HAP-1 (cell line): ENCODE measurements at regions of chr13 and their contacts with region 1.

Region 1: DNA sequence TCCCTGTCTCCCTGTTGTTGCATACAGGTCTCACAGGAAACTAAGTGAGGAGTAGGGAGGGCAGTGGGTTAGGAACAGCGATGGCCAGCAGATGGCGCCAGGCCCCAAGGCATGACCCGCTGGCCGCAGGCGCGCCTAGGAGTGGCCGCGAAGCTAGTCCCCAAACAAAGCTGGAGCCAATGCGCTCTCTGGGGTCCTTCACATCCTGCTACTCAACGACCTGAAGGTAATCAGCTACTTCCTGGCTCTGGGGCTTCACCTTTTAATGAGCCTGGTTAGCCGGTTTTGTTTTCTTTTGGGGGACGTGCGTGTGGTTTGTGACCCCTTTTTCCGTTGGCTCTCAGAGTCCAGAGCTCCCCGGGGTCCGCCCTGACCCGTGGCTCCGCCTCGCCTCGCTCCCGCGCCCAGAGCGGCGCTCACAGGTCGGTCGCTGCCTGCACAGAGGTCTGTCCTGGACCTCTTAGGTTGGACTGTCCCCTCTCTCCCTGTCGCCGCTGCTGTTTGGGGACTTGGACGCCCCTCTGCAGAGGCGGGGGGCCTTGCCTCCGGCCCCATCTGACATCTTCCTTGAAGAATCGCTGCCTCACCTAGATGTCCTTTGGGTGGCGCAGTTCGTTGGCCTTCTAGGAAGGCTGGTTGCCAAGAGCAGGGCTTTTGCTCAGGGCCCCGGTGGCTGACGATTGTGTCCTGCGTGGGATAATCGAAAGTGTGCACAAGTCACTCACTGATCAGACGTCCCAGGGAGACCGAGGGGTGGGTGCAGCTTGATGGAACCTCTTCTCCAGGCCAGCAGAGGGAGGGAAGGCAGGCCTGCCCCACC is 62.1 kb upstream of the GTF3A start:
- DNase-seq: peak; percentile 77 to 92
- H3K4me3 ChIP-seq: peak overlapping the region; percentile 24
- H3K4me1 ChIP-seq: peaks cover 4% of the 10 kb centered on the region
- H3K27me3 ChIP-seq: no peaks in the 10 kb centered on the region

Region 2: GRCh38 chr13:27043013-27043412 is 319.3 kb before region 1 on chr13:
- in situ Hi-C with region 1: no loop called
- DNase-seq: peak; percentile 9 to 50
- H3K4me3 ChIP-seq: no peak overlapping the region
- H3K4me1 ChIP-seq: no peaks in the 10 kb centered on the region
- H3K27me3 ChIP-seq: no peaks in the 10 kb centered on the region

Region 3: GRCh38 chr13:27251166-27252091 is 110.8 kb before region 1 on chr13 and contains the start of gene RPL21:
- in situ Hi-C with region 1: no loop called
- DNase-seq: peak; percentile 84 to 92
- H3K4me3 ChIP-seq: peak within 1 kb of the TSS; percentile 97
- H3K4me1 ChIP-seq: peaks cover 5% of the 10 kb centered on the region
- H3K27me3 ChIP-seq: no peaks in the 10 kb centered on the region

Region 4: GRCh38 chr13:27988520-27988919 is 626.2 kb after region 1 on chr13 and contains the start of gene URAD:
- in situ Hi-C with region 1: loop called (anchors 5 kb)
- DNase-seq: no peak
- H3K4me3 ChIP-seq: no peak within 1 kb of the TSS
- H3K4me1 ChIP-seq: no peaks in the 10 kb centered on the region
- H3K27me3 ChIP-seq: no peaks in the 10 kb centered on the region